ENCODE measurements at regions of chr17 and their contacts with region 1.

Region 1: GRCh38 chr17:48586355-48587258 is 3.4 kb downstream of the HOXB3 start:
- DNase-seq: peak in 1 of 3 donors; percentile 40
- H3K4me3 ChIP-seq: peak overlapping the region; percentile 3 to 97 (median 82)
- H3K27ac ChIP-seq: peak overlapping the region; percentile 80 to 87
- H3K4me1 ChIP-seq: peaks cover 11 to 93% (median 72%) of the 10 kb centered on the region in 4 experiments
- H3K27me3 ChIP-seq: peaks cover 0 to 7% (median 0%) of the 10 kb centered on the region in 5 experiments

Region 2: GRCh38 chr17:48335858-48336500 is 250.6 kb before region 1 on chr17:
- CTCF ChIA-PET with region 1: interaction called, 31 read pairs
- POLR2A ChIA-PET with region 1: interaction called, 3 read pairs
- DNase-seq: peak; percentile 69 to 79 (median 71)
- H3K4me3 ChIP-seq: peak overlapping the region in 1 of 7 experiments; percentile 50
- H3K27ac ChIP-seq: no peak overlapping the region
- H3K4me1 ChIP-seq: peaks cover 0 to 3% (median 0%) of the 10 kb centered on the region in 4 experiments
- H3K27me3 ChIP-seq: no peaks in the 10 kb centered on the region

Region 3: DNA sequence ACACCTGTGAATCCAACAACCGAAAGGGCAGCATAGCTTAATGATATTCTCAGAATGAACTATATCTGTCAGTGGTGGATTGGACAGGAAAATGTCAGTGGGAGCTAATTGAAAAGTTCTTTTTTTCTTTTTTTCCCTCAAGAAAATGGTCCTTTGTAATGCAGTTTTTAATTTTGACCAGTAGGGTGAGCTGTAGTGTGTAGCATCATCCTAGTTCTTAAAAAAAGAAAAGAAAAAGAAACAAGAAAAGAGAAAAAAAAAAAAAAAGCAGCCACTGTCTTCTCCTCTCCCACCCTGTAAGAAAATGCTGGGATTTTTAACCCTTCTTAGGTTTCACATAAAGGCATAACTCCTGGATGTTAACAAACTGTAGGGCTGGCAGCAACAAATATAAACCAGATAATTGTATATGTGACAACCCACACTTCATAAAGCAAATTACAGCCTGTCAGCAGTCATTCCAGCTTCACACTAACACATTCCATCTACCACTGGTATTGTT is 234.7 kb before region 1 on chr17:
- CTCF ChIA-PET with region 1: interaction called, 22 read pairs
- POLR2A ChIA-PET with region 1: no interaction called
- DNase-seq: peak; percentile 54 to 63 (median 62)
- H3K4me3 ChIP-seq: no peak overlapping the region
- H3K27ac ChIP-seq: no peak overlapping the region
- H3K4me1 ChIP-seq: peaks cover 0 to 3% (median 0%) of the 10 kb centered on the region in 4 experiments
- H3K27me3 ChIP-seq: no peaks in the 10 kb centered on the region

Region 4: DNA sequence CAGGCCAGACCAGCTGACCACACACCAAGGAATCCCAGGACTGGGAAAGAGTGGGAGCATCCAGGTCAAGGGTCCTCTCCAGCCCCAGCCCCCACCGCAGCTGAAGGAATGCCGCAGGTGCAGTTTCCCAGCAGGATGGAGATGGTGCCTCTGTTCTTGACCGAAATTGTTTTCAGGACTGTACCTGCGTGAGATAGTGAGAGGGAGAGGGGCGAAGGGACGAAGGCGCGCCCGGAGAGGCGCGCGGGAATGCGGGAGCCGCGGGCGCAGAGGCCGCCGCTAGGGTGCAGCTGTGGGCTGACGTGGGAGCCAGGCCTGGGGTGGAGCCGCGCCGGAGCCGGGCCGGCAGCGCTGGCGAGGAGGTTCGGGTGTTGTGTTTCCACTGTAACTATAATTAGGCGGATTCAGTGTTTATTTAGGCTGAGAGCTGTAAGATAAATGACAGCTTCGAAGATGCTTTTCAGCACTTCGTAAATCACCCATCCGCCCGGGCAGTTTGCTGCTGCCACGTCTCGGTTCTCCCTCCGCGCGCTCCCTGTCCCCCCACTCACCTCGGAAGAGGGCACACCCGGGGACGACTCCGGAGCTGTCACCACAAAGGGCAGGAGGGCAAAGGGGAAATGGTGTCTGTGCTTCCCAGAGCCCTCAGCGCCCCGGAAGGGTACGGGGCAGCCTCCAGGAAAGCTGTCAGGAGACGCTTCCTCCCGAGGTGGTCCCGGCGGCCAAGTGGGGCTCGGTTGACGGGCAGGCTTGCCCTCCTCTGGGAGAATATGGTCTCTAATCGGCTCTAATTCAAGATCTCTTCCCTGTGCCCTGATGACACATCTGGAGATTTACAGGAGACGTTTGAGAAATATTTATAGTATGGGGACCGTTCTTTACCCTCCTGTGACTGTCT is 94.0 kb before region 1 on chr17:
- CTCF ChIA-PET with region 1: interaction called, 10 read pairs
- POLR2A ChIA-PET with region 1: no interaction called
- DNase-seq: peak; percentile 52 to 67 (median 58)
- H3K4me3 ChIP-seq: peak overlapping the region; percentile 2 to 79 (median 51)
- H3K27ac ChIP-seq: peak overlapping the region in 1 of 2 experiments; percentile 58
- H3K4me1 ChIP-seq: peaks cover 4 to 54% (median 46%) of the 10 kb centered on the region in 4 experiments
- H3K27me3 ChIP-seq: no peaks in the 10 kb centered on the region

Region 5: DNA sequence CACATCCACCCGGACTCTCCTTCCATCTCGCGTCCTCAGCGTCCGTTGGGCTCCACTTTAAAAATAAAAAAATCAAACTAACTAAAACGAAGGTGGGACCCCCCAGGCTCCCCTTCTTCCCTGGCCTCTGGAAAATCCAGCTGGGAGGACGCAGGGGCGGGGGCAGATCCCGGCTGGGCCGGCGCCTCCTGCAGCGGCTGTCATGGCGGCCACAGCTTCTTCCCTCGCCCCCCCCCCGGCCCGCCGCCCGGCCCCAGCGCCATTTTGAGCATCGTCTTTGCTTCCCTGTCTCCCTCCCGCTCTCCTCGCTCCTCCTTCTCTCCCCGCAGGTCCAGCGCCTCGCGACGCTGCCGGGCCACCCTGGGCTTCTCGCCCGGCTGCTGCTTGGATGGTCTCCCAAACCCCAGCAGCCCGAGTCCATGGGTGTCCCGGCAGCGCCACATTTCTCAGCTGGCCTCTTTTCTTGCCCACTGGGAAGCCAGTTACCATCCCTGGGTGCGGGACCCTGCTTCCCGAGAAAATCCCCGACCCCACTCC is 45.0 kb before region 1 on chr17:
- CTCF ChIA-PET with region 1: interaction called, 14 read pairs
- POLR2A ChIA-PET with region 1: interaction called, 5 read pairs
- DNase-seq: peak in 1 of 3 donors; percentile 56
- H3K4me3 ChIP-seq: peak overlapping the region; percentile 63 to 95 (median 89)
- H3K27ac ChIP-seq: peak overlapping the region; percentile 83 to 95
- H3K4me1 ChIP-seq: peaks cover 12 to 60% (median 43%) of the 10 kb centered on the region in 4 experiments
- H3K27me3 ChIP-seq: no peaks in the 10 kb centered on the region

Region 6: GRCh38 chr17:48646183-48647102 is 59.8 kb after region 1 on chr17:
- CTCF ChIA-PET with region 1: no interaction called
- POLR2A ChIA-PET with region 1: no interaction called
- DNase-seq: peak in 1 of 3 donors; percentile 41
- H3K4me3 ChIP-seq: peak overlapping the region in 4 of 7 experiments; percentile 36 to 79 (median 71)
- H3K27ac ChIP-seq: no peak overlapping the region
- H3K4me1 ChIP-seq: peaks cover 3 to 22% (median 18%) of the 10 kb centered on the region in 4 experiments
- H3K27me3 ChIP-seq: peaks cover 26 to 89% (median 52%) of the 10 kb centered on the region in 5 experiments

Region 7: GRCh38 chr17:48715496-48716399 is 129.1 kb after region 1 on chr17:
- CTCF ChIA-PET with region 1: no interaction called
- POLR2A ChIA-PET with region 1: no interaction called
- DNase-seq: no peak
- H3K4me3 ChIP-seq: no peak overlapping the region
- H3K27ac ChIP-seq: no peak overlapping the region
- H3K4me1 ChIP-seq: peaks cover 0 to 4% (median 0%) of the 10 kb centered on the region in 4 experiments
- H3K27me3 ChIP-seq: peaks cover 13 to 96% (median 43%) of the 10 kb centered on the region in 5 experiments